CD14-positive monocyte (primary cell): ENCODE measurements at regions of chr12 and their contacts with region 1.

Region 1: DNA sequence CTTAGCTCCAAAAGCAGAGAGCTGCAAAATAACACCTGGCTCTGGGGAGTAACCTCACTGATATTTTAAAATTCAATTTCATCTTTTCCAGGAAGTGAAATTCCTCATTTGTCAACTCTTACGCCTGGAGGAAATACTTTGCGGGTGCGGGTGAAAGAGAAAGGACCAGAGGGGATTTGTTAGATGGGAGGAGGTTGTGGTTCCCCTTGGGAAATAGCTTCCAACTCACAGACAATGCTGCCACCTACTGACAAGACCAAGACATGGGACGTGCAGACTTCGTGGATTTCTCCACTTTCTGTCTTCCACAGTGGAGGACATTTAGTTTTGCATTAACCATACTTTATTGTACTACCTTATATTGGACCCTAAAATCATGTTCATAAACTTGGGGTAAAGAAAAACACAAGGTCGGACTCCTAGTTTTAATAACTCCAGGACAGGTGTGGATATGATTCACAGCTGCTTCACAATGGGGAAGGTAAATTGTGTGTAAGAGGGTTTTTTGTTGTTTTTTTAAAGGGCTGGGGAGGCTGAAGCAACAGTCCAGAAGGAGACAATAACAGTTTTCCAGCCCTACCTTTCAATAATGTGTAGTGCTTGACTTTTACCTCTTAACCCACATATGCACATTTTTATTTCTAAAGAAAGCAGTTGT is 10.8 kb downstream of the FBXL14 start:
- DNase-seq: peak; percentile 70 to 82 (median 81)
- H3K4me3 ChIP-seq: peak overlapping the region in 1 of 3 experiments; percentile 44
- H3K4me3 Mint-ChIP-seq: peak overlapping the region in 1 of 2 donors; percentile 76
- H3K27ac ChIP-seq: no peak overlapping the region
- H3K27ac Mint-ChIP-seq: no peak overlapping the region
- H3K4me1 ChIP-seq: peaks cover 4 to 8% of the 10 kb centered on the region in 2 donors
- H3K4me1 Mint-ChIP-seq: peaks cover 17% of the 10 kb centered on the region
- H3K27me3 ChIP-seq: no peaks in the 10 kb centered on the region
- H3K27me3 Mint-ChIP-seq: peaks cover 0 to 3% (median 2%) of the 10 kb centered on the region in 3 donors
- CTCF ChIP-seq: peak; percentile 92

Region 2: DNA sequence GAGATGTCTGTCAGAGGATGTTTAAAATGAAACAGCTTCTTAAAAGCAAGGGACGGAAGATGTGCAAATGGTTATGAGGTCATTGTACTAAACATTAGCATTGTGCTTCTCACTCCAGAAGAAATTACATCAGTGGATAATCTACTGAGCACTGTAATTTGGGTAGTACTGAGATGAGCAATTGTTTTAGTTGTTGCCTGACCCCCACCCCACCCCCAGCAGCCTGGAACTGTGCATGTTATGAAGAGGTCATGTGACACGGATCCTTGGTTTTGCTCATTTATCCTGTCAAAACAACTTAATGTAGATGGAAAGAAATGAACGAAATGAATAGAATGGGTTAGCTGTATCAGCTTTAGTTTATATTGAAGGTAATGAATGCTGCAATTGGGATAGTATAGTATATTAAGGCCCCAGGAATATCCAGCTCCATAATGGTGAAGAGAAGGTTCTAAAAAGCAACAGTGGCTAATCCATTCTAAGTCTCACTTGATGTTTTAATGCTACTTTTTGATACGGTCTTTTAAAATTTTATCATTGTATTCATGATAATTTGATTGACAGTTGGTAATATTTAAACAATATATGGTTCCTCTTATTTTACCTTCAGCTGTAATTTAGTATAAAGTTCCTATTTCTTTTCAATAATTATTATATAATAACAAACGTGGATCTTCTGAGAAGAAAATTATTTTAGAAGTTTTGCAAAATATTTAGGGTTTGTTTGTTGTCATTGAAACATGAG is 772.7 kb before region 1 on chr12:
- intact Hi-C with region 1: loop called in 1 of 2 experiments (anchors 10 kb)
- DNase-seq: no peak
- H3K4me3 ChIP-seq: no peak overlapping the region
- H3K4me3 Mint-ChIP-seq: no peak overlapping the region
- H3K27ac ChIP-seq: no peak overlapping the region
- H3K27ac Mint-ChIP-seq: peak overlapping the region in 2 of 7 donors; percentile 37 to 39
- H3K4me1 ChIP-seq: peaks cover 26 to 31% of the 10 kb centered on the region in 2 donors
- H3K4me1 Mint-ChIP-seq: peaks cover 31% of the 10 kb centered on the region
- H3K27me3 ChIP-seq: no peaks in the 10 kb centered on the region
- H3K27me3 Mint-ChIP-seq: no peaks in the 10 kb centered on the region
- CTCF ChIP-seq: no peak

Region 3: DNA sequence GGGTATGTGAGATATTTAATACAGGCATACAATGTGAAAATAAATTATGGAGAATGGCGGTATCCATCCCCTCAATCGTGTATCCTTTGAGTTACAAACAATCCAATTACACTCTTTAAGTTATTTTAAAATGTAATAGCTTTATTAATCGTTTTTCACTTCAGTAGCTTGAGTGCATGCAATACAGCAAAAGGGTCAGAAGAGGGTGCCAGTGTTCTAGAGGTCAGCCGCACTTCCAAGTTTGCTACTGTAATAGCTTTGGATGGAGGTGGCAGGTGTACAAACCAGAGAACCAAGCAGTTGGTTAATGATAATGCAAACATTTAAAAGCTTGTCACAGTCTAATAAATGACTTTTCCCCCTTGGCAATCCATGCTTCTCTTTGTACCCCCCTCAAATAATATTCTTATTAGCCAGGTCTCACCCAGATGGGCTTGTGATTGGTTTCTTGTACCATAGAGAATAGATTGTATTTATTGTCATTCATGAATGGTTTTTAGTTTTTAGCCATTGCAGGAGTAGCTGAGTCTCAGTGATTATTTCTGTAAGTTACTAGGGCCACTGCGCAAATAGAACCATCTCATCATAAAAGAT is 465.5 kb before region 1 on chr12:
- intact Hi-C with region 1: loop called (anchors 2 kb)
- DNase-seq: peak; percentile 51 to 67 (median 63)
- H3K4me3 ChIP-seq: no peak overlapping the region
- H3K4me3 Mint-ChIP-seq: no peak overlapping the region
- H3K27ac ChIP-seq: no peak overlapping the region
- H3K27ac Mint-ChIP-seq: no peak overlapping the region
- H3K4me1 ChIP-seq: no peaks in the 10 kb centered on the region
- H3K4me1 Mint-ChIP-seq: no peaks in the 10 kb centered on the region
- H3K27me3 ChIP-seq: no peaks in the 10 kb centered on the region
- H3K27me3 Mint-ChIP-seq: peaks cover 0 to 3% (median 0%) of the 10 kb centered on the region in 3 donors
- CTCF ChIP-seq: peak; percentile 95

Region 4: GRCh38 chr12:1279050-1279449 is 304.5 kb before region 1 on chr12:
- intact Hi-C with region 1: loop called in 1 of 2 experiments (anchors 5 kb)
- DNase-seq: peak in 2 of 3 donors; percentile 27 to 35
- H3K4me3 ChIP-seq: no peak overlapping the region
- H3K4me3 Mint-ChIP-seq: peak overlapping the region in 1 of 2 donors; percentile 12
- H3K27ac ChIP-seq: no peak overlapping the region
- H3K27ac Mint-ChIP-seq: peak overlapping the region in 3 of 7 donors; percentile 18 to 71 (median 20)
- H3K4me1 ChIP-seq: peaks cover 4 to 25% of the 10 kb centered on the region in 2 donors
- H3K4me1 Mint-ChIP-seq: peaks cover 32% of the 10 kb centered on the region
- H3K27me3 ChIP-seq: no peaks in the 10 kb centered on the region
- H3K27me3 Mint-ChIP-seq: no peaks in the 10 kb centered on the region
- CTCF ChIP-seq: peak; percentile 41

Region 5: GRCh38 chr12:1544996-1545700 is 38.4 kb before region 1 on chr12:
- intact Hi-C with region 1: no loop called
- DNase-seq: peak; percentile 30 to 73 (median 40)
- H3K4me3 ChIP-seq: peak overlapping the region in 1 of 3 experiments; percentile 60
- H3K4me3 Mint-ChIP-seq: peak overlapping the region in 1 of 2 donors; percentile 81
- H3K27ac ChIP-seq: no peak overlapping the region
- H3K27ac Mint-ChIP-seq: peak overlapping the region in 5 of 7 donors; percentile 26 to 78 (median 48)
- H3K4me1 ChIP-seq: peaks cover 33 to 34% of the 10 kb centered on the region in 2 donors
- H3K4me1 Mint-ChIP-seq: peaks cover 42% of the 10 kb centered on the region
- H3K27me3 ChIP-seq: peaks cover 6 to 8% of the 10 kb centered on the region in 2 donors
- H3K27me3 Mint-ChIP-seq: peaks cover 5 to 9% (median 5%) of the 10 kb centered on the region in 3 donors
- CTCF ChIP-seq: no peak